ENCODE measurements at regions of chr18 and their contacts with region 1.

Region 1: GRCh38 chr18:74342416-74343043 is 26.9 kb downstream of the C18orf63 start:
- DNase-seq: peak; percentile 72
- H3K4me3 Mint-ChIP-seq: no peak overlapping the region
- H3K27ac Mint-ChIP-seq: no peak overlapping the region
- H3K4me1 Mint-ChIP-seq: no peaks in the 10 kb centered on the region
- H3K27me3 Mint-ChIP-seq: peaks cover 39% of the 10 kb centered on the region

Region 2: GRCh38 chr18:74196220-74197119 is 146.1 kb before region 1 on chr18:
- intact Hi-C with region 1: loop called (anchors 1 kb)
- DNase-seq: peak; percentile 82
- H3K4me3 Mint-ChIP-seq: peak overlapping the region; percentile 81
- H3K27ac Mint-ChIP-seq: peak overlapping the region; percentile 11
- H3K4me1 Mint-ChIP-seq: peaks cover 2% of the 10 kb centered on the region
- H3K27me3 Mint-ChIP-seq: peaks cover 2% of the 10 kb centered on the region

Measured in activated CD4-positive, alpha-beta T cell treated with anti-CD3 and anti-CD28 coated beads, Interleukin-2, amount 10 ng/mL, durations not matched to agents 24 days and 14 days (primary cell).